Naive thymus-derived CD8-positive, alpha-beta T cell (primary cell): ENCODE measurements at regions of chr2 and their contacts with region 1.

Region 1: DNA sequence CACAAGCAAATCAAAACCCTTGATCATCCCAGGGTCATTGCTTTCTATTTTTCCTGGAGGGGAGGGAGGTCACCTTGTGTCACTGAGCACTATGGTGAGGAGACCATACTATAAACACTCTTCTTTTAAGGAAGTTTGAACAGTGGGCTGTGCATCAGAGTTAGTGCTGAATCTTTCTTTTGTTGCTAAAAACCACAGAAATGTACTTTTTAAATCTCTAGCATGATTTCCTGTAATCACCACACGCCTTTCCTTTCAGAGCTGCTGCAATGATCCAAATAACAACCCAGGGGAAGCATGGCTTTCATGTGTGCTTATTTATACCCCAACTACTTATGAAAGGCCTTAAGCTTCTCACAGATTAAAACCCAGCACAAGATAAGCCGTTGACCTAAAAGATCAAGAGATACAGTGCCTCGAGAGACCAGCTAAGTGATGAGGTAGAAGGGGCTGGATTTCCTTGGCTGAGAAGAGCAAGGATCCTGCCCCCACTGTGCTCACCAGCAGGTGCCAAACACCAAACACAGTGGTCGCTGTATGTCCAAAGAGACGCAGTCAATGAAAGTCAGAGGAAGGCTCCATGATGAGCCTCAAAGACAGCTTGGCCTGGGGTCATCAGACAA is 34.7 kb downstream of the TRABD2A start:
- DNase-seq: peak in 8 of 10 donors; percentile 55 to 88 (median 74)
- ATAC-seq: peak; percentile 74 to 76
- H3K4me3 Mint-ChIP-seq: peak overlapping the region; percentile 60 to 90 (median 82)
- H3K27ac Mint-ChIP-seq: peak overlapping the region; percentile 93 to 98 (median 97)
- H3K4me1 Mint-ChIP-seq: peaks cover 56 to 97% (median 95%) of the 10 kb centered on the region in 4 donors
- H3K27me3 Mint-ChIP-seq: no peaks in the 10 kb centered on the region

Region 2: DNA sequence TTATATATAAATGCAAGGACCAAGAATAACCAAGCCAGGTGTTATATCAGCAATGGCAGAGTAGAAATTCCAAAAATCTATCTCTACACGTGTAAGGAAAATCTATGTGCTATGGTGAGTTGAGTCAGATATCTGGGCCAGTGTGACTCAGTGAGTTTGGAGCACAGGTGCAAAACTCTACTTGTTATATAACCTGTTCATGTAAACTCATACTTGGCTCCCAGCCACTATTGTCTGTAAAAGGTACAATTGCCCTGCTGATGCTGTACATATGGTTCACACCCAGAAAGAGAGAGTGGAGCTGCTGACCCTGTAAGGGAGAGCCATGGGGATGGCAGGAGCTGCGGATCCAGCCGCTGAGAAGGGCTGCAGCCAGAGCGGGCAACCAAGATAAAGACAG is 77.3 kb before region 1 on chr2:
- POLR2A ChIA-PET with region 1: no interaction called
- DNase-seq: no peak
- ATAC-seq: no peak
- H3K4me3 Mint-ChIP-seq: no peak overlapping the region
- H3K27ac Mint-ChIP-seq: no peak overlapping the region
- H3K4me1 Mint-ChIP-seq: peaks cover 0 to 5% (median 1%) of the 10 kb centered on the region in 4 donors
- H3K27me3 Mint-ChIP-seq: no peaks in the 10 kb centered on the region

Region 3: GRCh38 chr2:84832772-84833461 is 13.2 kb before region 1 on chr2:
- POLR2A ChIA-PET with region 1: interaction called, 44 read pairs
- DNase-seq: peak in 2 of 10 donors; percentile 22 to 30
- ATAC-seq: peak; percentile 51 to 52
- H3K4me3 Mint-ChIP-seq: peak overlapping the region in 8 of 10 donors; percentile 49 to 85 (median 82)
- H3K27ac Mint-ChIP-seq: no peak overlapping the region
- H3K4me1 Mint-ChIP-seq: peaks cover 25 to 44% (median 31%) of the 10 kb centered on the region in 4 donors
- H3K27me3 Mint-ChIP-seq: no peaks in the 10 kb centered on the region

Region 4: GRCh38 chr2:84865181-84865783 is 19.1 kb after region 1 on chr2:
- POLR2A ChIA-PET with region 1: interaction called, 247 read pairs
- DNase-seq: peak in 3 of 10 donors; percentile 59 to 64 (median 61)
- ATAC-seq: peak; percentile 38 to 61
- H3K4me3 Mint-ChIP-seq: peak overlapping the region; percentile 37 to 90 (median 70)
- H3K27ac Mint-ChIP-seq: peak overlapping the region; percentile 93 to 99 (median 98)
- H3K4me1 Mint-ChIP-seq: peaks cover 43 to 91% (median 78%) of the 10 kb centered on the region in 4 donors
- H3K27me3 Mint-ChIP-seq: no peaks in the 10 kb centered on the region

Region 5: GRCh38 chr2:84888401-84889276 is 42.5 kb after region 1 on chr2:
- POLR2A ChIA-PET with region 1: interaction called, 14 read pairs
- DNase-seq: peak in 8 of 10 donors; percentile 40 to 84 (median 56)
- ATAC-seq: peak; percentile 96 to 98
- H3K4me3 Mint-ChIP-seq: peak overlapping the region; percentile 72 to 92 (median 86)
- H3K27ac Mint-ChIP-seq: peak overlapping the region; percentile 94 to 100 (median 98)
- H3K4me1 Mint-ChIP-seq: peaks cover 30 to 73% (median 49%) of the 10 kb centered on the region in 4 donors
- H3K27me3 Mint-ChIP-seq: no peaks in the 10 kb centered on the region

Region 6: DNA sequence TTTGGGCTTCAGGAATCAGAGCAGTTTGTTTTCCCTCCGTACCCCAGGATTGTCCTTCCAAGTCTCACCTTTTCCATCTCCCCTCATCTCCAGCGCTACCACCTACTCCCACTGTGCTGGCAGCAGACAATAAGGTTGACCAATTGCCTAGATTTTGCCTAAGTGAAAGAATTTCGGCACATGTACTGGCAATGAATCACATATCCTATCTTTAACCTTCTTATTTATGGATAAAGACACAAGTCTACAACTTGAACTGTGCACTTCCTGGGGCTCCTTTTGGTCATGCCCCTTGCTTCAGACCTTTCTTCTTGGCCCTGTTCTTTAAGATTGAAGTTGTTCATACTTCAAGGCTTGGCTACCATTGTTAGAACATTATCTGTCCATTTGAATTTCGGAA is 196.2 kb after region 1 on chr2:
- POLR2A ChIA-PET with region 1: no interaction called
- DNase-seq: no peak
- ATAC-seq: no peak
- H3K4me3 Mint-ChIP-seq: no peak overlapping the region
- H3K27ac Mint-ChIP-seq: peak overlapping the region in 4 of 10 donors; percentile 5 to 66 (median 49)
- H3K4me1 Mint-ChIP-seq: peaks cover 4 to 22% (median 11%) of the 10 kb centered on the region in 4 donors
- H3K27me3 Mint-ChIP-seq: no peaks in the 10 kb centered on the region

Region 7: DNA sequence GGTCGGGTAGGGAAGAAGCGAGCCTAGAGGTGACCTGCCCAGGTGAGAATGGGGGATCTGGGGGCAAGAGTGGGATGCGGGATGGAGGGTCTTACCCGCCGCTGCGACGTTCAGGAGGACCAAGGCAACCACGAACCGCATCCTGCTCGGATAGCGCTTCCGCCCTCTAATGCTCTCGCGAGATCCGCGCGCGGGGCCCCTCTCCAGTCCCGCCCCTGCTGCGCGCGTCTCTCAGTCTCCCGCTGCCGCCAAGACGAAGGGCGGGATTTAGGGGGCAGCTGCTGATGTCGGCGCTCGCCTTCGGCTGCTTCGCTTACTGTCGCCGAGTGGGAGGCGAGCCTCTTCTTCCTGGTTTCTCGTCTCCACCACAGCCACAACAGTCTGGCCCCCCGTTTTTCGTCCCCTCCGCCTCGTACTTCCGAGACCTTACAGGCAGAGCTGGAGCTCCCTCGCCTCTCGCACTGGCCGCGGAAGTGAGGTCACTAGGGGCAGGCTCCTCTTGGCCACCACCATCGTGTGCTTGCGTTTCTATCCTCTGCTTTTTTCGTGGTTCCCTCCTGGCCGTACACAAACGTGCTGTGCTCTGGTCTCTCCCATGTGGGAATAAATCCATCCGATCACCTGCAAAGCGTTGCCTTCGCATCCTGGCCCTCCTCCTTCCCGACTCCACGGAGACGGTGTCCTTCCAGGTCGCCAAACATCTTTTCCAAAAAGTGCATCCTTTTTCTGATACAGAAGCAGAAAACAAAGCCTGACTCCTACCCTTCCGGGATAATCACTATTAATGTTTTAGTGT is 481.9 kb after region 1 on chr2 and contains the start of gene TGOLN2:
- POLR2A ChIA-PET with region 1: no interaction called
- DNase-seq: peak; percentile 89 to 96 (median 94)
- ATAC-seq: peak; percentile 83 to 87
- H3K4me3 Mint-ChIP-seq: peak within 1 kb of the TSS; percentile 96 to 100 (median 99)
- H3K27ac Mint-ChIP-seq: peak within 1 kb of the TSS; percentile 97 to 100 (median 100)
- H3K4me1 Mint-ChIP-seq: peaks cover 27 to 53% (median 42%) of the 10 kb centered on the region in 4 donors
- H3K27me3 Mint-ChIP-seq: no peaks in the 10 kb centered on the region
- polyA plus RNA-seq, gene TGOLN2: 55.6 to 80.0 (median 65.1) TPM